Spleen (tissue), 13 donors: ENCODE measurements at regions of chr12 and their contacts with region 1.

Region 1: DNA sequence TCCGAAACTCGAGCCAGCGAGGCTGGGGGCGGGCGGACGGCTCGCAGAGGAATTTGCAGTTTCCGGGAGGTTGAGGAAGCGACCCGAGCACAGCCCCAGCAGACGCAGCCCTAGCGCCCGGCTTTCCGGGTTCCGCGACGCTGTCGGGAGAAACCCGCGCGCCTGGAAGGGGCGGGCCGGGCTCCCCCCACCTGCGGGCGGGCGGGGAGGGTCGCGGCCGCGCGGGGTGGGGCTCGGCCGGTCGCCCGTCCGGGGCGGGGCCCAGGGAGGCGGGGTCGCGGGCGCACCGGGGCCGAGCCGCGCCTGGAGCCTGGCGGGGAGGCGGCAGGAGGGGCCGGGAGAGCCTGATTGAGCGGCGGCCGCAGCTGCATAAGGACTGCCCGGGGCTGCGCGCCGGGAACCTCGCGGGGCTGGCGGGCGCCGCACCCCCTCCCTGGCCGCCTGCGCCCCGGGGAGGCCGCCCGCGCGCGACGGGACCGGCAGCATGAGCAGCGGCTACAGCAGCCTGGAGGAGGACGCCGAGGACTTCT is at the start of gene RASSF3:
- DNase-seq: peak; percentile 97
- H3K4me3 ChIP-seq: peak within 1 kb of the TSS; percentile 88 to 99 (median 97)
- H3K27ac ChIP-seq: peak within 1 kb of the TSS; percentile 93 to 99 (median 96)
- H3K4me1 ChIP-seq: peaks cover 26 to 58% (median 41%) of the 10 kb centered on the region in 6 donors
- H3K27me3 ChIP-seq: no peaks in the 10 kb centered on the region
- CTCF ChIP-seq: peak in 1 of 11 experiments; percentile 29
- POLR2A ChIP-seq: peak in 1 of 3 donors; percentile 43
- total RNA-seq, gene RASSF3: 69.1 to 120 (median 97.0) TPM

Region 2: GRCh38 chr12:64551698-64552097 is 58.5 kb before region 1 on chr12:
- intact Hi-C with region 1: loop called (anchors 10 kb)
- DNase-seq: no peak
- H3K4me3 ChIP-seq: no peak overlapping the region
- H3K27ac ChIP-seq: no peak overlapping the region
- H3K4me1 ChIP-seq: peaks cover 0 to 11% (median 5%) of the 10 kb centered on the region in 6 donors
- H3K27me3 ChIP-seq: no peaks in the 10 kb centered on the region
- CTCF ChIP-seq: no peak
- POLR2A ChIP-seq: no peak

Region 3: GRCh38 chr12:64679487-64679983 is 69.3 kb after region 1 on chr12:
- intact Hi-C with region 1: loop called (anchors 10 kb)
- DNase-seq: peak; percentile 83
- H3K4me3 ChIP-seq: peak overlapping the region in 1 of 8 donors; percentile 24
- H3K27ac ChIP-seq: peak overlapping the region; percentile 49 to 93 (median 82)
- H3K4me1 ChIP-seq: peaks cover 77 to 100% (median 97%) of the 10 kb centered on the region in 6 donors
- H3K27me3 ChIP-seq: no peaks in the 10 kb centered on the region
- CTCF ChIP-seq: no peak
- POLR2A ChIP-seq: no peak